Heart right ventricle (tissue), 16 donors: ENCODE measurements at regions of chr1 and their contacts with region 1.

Region 1: GRCh38 chr1:44417351-44418021 is 12.4 kb downstream of the RNF220 start:
- DNase-seq: peak in 1 of 2 donors; percentile 58
- ATAC-seq: peak; percentile 74 to 85 (median 81)
- H3K4me3 ChIP-seq: peak overlapping the region; percentile 27 to 54 (median 44)
- H3K27ac ChIP-seq: peak overlapping the region in 7 of 10 donors; percentile 5 to 61 (median 23)
- H3K4me1 ChIP-seq: peaks cover 4 to 37% (median 20%) of the 10 kb centered on the region in 9 donors
- H3K27me3 ChIP-seq: peaks cover 0 to 95% (median 87%) of the 10 kb centered on the region in 7 donors
- CTCF ChIP-seq: no peak

Region 2: DNA sequence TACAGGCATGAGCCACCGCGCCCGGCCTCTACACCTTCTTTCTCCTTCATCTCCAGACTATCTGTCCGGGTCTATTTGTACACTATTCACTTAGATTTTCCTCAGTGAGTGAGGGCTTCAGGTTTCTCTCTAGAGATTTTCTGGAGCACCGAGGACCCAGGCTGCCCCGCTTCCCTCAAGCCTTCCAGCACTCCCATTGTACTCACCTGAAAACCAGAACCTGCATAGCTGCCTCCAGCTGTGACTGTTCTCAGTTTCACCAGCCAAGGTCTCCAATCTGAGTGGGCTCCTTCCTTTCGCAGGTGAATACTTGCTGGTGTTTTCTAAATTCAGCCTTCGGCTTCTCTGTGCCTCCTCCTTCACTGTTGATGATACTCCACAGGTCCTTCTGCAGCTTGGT is 217.2 kb before region 1 on chr1:
- intact Hi-C with region 1: loop called in 1 of 10 experiments (anchors 5 kb)
- DNase-seq: no peak
- ATAC-seq: no peak
- H3K4me3 ChIP-seq: no peak overlapping the region
- H3K27ac ChIP-seq: no peak overlapping the region
- H3K4me1 ChIP-seq: no peaks in the 10 kb centered on the region
- H3K27me3 ChIP-seq: peaks cover 0 to 14% (median 0%) of the 10 kb centered on the region in 7 donors
- CTCF ChIP-seq: no peak

Region 3: DNA sequence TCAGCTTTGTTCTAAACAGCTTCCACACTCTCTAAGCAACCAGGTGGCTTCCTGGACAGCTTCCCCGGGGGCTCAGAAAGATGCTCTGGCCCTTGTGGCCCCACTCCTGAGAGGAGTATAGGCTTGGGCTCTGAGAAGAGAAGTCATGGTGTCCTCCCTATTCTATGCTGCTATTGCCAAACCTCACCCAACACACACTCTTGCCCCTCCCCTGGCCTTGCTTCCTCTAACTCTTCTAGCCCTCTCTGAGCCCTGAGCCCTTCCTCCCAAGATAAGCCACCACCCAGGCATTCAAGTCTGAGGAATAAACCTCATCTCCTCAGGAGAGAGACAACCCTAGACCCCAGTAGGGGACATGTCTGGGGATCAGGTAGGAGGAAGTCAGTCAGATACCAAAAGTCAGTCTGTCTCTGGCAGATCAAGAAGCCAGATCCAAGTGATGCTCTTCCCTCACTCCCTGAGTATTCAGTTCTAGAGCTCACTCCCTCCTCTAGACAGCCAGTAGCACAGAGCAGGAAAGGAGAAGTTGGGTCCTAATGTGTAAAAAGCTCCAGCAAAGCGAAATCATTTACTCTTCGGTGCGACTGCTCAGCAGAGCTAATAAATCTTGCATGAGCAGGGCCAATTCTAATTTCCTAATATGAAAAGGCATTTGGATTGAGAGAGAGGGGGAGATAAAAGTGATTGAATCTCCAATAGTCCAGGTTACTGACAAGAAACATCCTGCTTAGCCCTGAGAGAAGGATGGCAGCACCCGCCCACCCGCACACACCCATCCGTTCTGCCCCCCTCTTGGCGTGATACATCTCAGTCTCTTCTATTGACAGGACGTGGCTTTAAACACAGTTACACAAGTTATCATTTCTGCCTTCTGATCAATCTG is 153.7 kb before region 1 on chr1:
- intact Hi-C with region 1: no loop called
- DNase-seq: no peak
- ATAC-seq: no peak
- H3K4me3 ChIP-seq: no peak overlapping the region
- H3K27ac ChIP-seq: peak overlapping the region in 1 of 10 donors; percentile 34
- H3K4me1 ChIP-seq: peaks cover 0 to 49% (median 0%) of the 10 kb centered on the region in 9 donors
- H3K27me3 ChIP-seq: no peaks in the 10 kb centered on the region
- CTCF ChIP-seq: no peak